ENCODE measurements at regions of chr7 and their contacts with region 1.

Region 1: DNA sequence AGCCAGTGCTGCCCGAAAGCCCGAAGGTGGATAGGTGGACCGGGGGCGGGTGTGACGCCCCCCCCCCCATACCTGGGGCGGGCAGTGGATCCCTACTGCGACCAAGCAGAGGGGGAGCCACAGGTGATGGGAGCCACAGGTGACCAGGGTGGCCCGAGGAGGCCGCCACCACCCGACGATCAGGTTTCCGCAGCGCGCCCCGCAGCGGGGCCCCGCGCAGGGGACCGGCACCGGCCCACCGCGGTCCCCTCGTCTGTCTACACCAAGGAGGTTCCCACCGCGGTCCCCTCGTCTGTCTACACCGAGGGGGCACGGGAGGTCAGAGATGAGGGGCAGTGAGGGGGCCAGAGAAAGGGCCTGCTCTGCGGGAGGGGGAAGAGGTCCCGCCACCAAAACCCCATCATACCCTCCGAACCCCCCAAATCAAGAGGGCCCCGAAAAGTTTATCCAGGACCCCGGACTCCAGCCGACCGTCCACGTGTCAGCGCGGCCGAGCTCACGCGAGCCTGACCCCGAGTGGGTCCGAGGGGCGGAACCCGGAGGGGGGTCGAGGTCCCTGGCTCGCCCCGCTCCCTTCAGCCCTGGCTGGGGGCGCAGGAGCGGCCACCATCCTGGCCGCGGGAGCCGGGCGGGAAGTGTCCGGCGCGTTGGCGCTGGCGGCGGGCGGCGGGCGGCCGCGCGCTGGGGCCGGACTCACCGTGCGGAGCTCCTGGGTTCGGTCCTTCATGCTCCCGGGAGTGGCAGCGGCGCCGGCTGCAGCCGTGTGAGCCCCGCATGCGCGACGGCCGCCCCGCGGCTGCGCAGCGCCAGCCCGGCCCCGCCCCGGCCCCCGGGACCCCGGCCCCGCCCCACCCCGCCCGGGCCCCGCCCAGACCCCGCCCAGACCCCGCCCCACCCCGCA is at the start of gene STX1A:
- DNase-seq: peak; percentile 81
- H3K4me3 Mint-ChIP-seq: peak within 1 kb of the TSS; percentile 70
- H3K27ac Mint-ChIP-seq: peak within 1 kb of the TSS; percentile 62
- H3K4me1 Mint-ChIP-seq: peaks cover 34% of the 10 kb centered on the region
- H3K27me3 Mint-ChIP-seq: no peaks in the 10 kb centered on the region
- total RNA-seq, gene STX1A: 31.8 to 39.2 TPM

Region 2: GRCh38 chr7:73557108-73557396 is 162.1 kb before region 1 on chr7:
- CTCF ChIA-PET with region 1: no interaction called
- POLR2A ChIA-PET with region 1: no interaction called
- intact Hi-C with region 1: no loop called
- DNase-seq: peak; percentile 95
- H3K4me3 Mint-ChIP-seq: peak overlapping the region; percentile 79
- H3K27ac Mint-ChIP-seq: peak overlapping the region; percentile 91
- H3K4me1 Mint-ChIP-seq: peaks cover 34% of the 10 kb centered on the region
- H3K27me3 Mint-ChIP-seq: peaks cover 2% of the 10 kb centered on the region

Region 3: GRCh38 chr7:73578342-73579127 is 140.6 kb before region 1 on chr7 and contains the start of gene TBL2:
- CTCF ChIA-PET with region 1: no interaction called
- POLR2A ChIA-PET with region 1: no interaction called
- intact Hi-C with region 1: loop called (anchors 1 kb)
- DNase-seq: peak; percentile 99
- H3K4me3 Mint-ChIP-seq: peak within 1 kb of the TSS; percentile 90
- H3K27ac Mint-ChIP-seq: peak within 1 kb of the TSS; percentile 95
- H3K4me1 Mint-ChIP-seq: peaks cover 22% of the 10 kb centered on the region
- H3K27me3 Mint-ChIP-seq: no peaks in the 10 kb centered on the region
- total RNA-seq, gene TBL2: 23.0 to 25.3 TPM

Region 4: DNA sequence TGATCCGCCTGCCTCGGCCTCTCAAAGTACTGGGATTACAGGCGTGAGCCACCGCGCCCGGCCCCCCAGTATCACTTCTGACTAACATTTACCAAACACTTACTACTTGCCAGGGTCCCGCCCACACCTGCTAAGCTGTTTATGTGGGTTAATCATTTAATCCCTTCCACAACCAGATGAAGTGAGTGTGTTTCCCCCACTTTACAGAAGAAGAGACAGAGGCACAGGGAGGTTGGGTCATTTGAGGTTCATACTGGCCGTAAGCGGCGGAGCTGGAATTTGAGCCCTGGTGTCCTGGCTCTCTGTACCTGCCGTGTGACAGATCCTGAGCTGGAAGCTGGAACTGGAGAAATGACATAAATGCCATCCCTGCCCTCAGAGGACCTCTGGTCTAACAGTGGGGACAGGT is 66.6 kb before region 1 on chr7:
- CTCF ChIA-PET with region 1: no interaction called
- POLR2A ChIA-PET with region 1: no interaction called
- intact Hi-C with region 1: no loop called
- DNase-seq: no peak
- H3K4me3 Mint-ChIP-seq: no peak overlapping the region
- H3K27ac Mint-ChIP-seq: no peak overlapping the region
- H3K4me1 Mint-ChIP-seq: peaks cover 6% of the 10 kb centered on the region
- H3K27me3 Mint-ChIP-seq: peaks cover 34% of the 10 kb centered on the region

Region 5: GRCh38 chr7:73683056-73683964 is 35.8 kb before region 1 on chr7 and contains the starts of genes BUD23 and DNAJC30:
- CTCF ChIA-PET with region 1: no interaction called
- POLR2A ChIA-PET with region 1: no interaction called
- intact Hi-C with region 1: loop called (anchors 1 kb)
- DNase-seq: peak; percentile 99
- H3K4me3 Mint-ChIP-seq: peak within 1 kb of the TSS; percentile 99
- H3K27ac Mint-ChIP-seq: peak within 1 kb of the TSS; percentile 86
- H3K4me1 Mint-ChIP-seq: peaks cover 41% of the 10 kb centered on the region
- H3K27me3 Mint-ChIP-seq: no peaks in the 10 kb centered on the region
- total RNA-seq, gene BUD23: 92.0 to 94.0 TPM
- total RNA-seq, gene DNAJC30: 6.1 to 6.3 TPM

Region 6: GRCh38 chr7:73707142-73707595 is 12.0 kb before region 1 on chr7:
- CTCF ChIA-PET with region 1: interaction called, 3 read pairs
- POLR2A ChIA-PET with region 1: interaction called, 18 read pairs
- intact Hi-C with region 1: loop called (anchors 1 kb)
- DNase-seq: peak; percentile 31
- H3K4me3 Mint-ChIP-seq: no peak overlapping the region
- H3K27ac Mint-ChIP-seq: no peak overlapping the region
- H3K4me1 Mint-ChIP-seq: peaks cover 10% of the 10 kb centered on the region
- H3K27me3 Mint-ChIP-seq: no peaks in the 10 kb centered on the region

Region 7: DNA sequence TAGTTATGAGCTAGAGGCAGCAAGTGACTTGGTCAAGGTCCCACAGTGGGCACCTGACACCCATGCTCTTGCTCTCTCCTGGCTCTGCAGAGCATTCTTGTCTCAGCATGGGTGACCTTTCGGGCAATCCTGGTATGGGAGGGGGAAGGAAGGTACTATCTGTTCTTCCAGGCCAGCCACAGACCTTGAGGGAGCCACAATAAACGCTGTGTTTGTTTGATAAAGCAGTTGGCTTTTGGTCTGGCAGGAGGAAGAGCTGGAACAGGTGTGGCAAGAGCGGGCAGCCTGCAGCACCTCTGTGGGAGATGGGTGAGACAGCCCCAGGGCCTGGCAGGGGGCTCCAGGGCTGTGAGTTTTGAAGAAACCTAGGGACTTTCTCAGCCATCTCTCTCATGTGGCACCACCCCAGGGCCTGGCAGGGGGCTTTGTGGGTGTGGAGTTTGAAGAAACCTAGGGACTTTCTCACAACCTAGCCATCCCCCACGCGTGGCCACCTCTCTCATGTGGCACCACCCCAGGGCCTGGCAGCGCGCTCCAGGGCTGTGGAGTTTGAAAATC is 39.5 kb after region 1 on chr7:
- CTCF ChIA-PET with region 1: no interaction called
- POLR2A ChIA-PET with region 1: no interaction called
- intact Hi-C with region 1: no loop called
- DNase-seq: no peak
- H3K4me3 Mint-ChIP-seq: no peak overlapping the region
- H3K27ac Mint-ChIP-seq: no peak overlapping the region
- H3K4me1 Mint-ChIP-seq: no peaks in the 10 kb centered on the region
- H3K27me3 Mint-ChIP-seq: no peaks in the 10 kb centered on the region

Region 8: DNA sequence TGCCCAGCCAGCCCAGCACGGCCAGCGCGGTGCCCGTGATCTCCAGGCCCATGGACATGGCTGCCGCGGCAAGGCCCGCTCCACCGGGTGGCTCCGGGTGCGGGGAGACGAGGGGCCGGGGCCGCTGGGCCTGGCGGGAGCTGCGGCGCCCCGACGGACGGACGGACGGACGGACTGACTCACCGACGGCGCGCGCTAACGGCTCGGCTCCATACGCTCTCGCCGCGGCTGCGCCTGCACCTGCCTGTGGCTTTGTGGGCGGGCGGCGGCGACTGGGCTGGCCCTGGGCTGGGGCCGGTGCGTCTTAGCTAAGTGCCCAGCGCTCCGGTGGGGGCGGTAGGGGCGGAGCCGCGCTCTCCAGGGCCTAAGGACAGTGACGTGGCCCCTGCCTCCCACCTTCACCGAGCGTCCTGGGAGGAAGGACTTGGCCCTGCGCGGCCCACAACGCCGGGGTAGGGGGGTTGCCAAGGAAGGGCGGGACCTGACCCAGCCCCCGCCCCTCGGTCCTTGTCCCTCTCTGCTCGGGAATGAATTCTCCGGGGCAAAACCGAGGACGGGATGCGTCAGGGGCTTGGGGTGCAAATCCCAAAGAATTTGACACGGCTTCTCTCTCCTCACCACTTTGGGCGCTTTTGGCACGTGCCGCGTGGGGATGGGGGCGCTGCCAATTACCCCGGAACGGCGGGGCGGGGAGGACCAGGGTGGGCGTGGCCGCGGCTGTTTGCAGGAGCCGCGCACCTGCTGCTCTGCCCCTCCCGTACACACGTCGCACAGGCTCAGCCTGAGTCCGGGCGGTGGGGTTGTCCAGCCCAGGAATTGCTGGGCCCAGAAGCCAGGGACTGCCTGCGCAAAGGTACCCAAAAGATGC is 51.1 kb after region 1 on chr7 and contains the start of gene CLDN3:
- CTCF ChIA-PET with region 1: no interaction called
- POLR2A ChIA-PET with region 1: no interaction called
- intact Hi-C with region 1: no loop called
- DNase-seq: peak; percentile 14
- H3K4me3 Mint-ChIP-seq: no peak within 1 kb of the TSS
- H3K27ac Mint-ChIP-seq: no peak within 1 kb of the TSS
- H3K4me1 Mint-ChIP-seq: peaks cover 9% of the 10 kb centered on the region
- H3K27me3 Mint-ChIP-seq: peaks cover 38% of the 10 kb centered on the region
- total RNA-seq, gene CLDN3: not detected

Region 9: GRCh38 chr7:73851410-73852234 is 132.5 kb after region 1 on chr7:
- CTCF ChIA-PET with region 1: no interaction called
- POLR2A ChIA-PET with region 1: no interaction called
- intact Hi-C with region 1: loop called (anchors 5 kb)
- DNase-seq: peak; percentile 55
- H3K4me3 Mint-ChIP-seq: no peak overlapping the region
- H3K27ac Mint-ChIP-seq: peak overlapping the region; percentile 45
- H3K4me1 Mint-ChIP-seq: peaks cover 30% of the 10 kb centered on the region
- H3K27me3 Mint-ChIP-seq: peaks cover 12% of the 10 kb centered on the region